Endothelial cell of umbilical vein (primary cell): ENCODE measurements at regions of chr7 and their contacts with region 1.

Region 1: GRCh38 chr7:131107337-131108211 is 220.1 kb upstream of the MKLN1 start:
- DNase-seq: peak; percentile 92
- H3K4me3 ChIP-seq: peak overlapping the region; percentile 61 to 79 (median 63)
- H3K27ac ChIP-seq: peak overlapping the region; percentile 98
- H3K4me1 ChIP-seq: peaks cover 41% of the 10 kb centered on the region
- H3K27me3 ChIP-seq: no peaks in the 10 kb centered on the region
- CTCF ChIP-seq: no peak
- POLR2A ChIP-seq: no peak

Region 2: GRCh38 chr7:130887182-130888016 is 220.2 kb before region 1 on chr7:
- CTCF ChIA-PET with region 1: no interaction called
- POLR2A ChIA-PET with region 1: no interaction called
- dilution Hi-C with region 1: no loop called
- intact Hi-C with region 1: loop called (anchors 5 kb)
- DNase-seq: peak; percentile 89
- H3K4me3 ChIP-seq: no peak overlapping the region
- H3K27ac ChIP-seq: peak overlapping the region; percentile 98
- H3K4me1 ChIP-seq: peaks cover 74% of the 10 kb centered on the region
- H3K27me3 ChIP-seq: no peaks in the 10 kb centered on the region
- CTCF ChIP-seq: no peak
- POLR2A ChIP-seq: peak; percentile 72

Region 3: GRCh38 chr7:131235489-131236317 is 128.1 kb after region 1 on chr7:
- CTCF ChIA-PET with region 1: interaction called, 4 read pairs
- POLR2A ChIA-PET with region 1: interaction called, 3 read pairs
- dilution Hi-C with region 1: no loop called
- intact Hi-C with region 1: loop called (anchors 1 kb)
- DNase-seq: peak; percentile 96
- H3K4me3 ChIP-seq: peak overlapping the region in 1 of 3 experiments; percentile 47
- H3K27ac ChIP-seq: peak overlapping the region; percentile 95
- H3K4me1 ChIP-seq: peaks cover 33% of the 10 kb centered on the region
- H3K27me3 ChIP-seq: no peaks in the 10 kb centered on the region
- CTCF ChIP-seq: no peak
- POLR2A ChIP-seq: no peak

Region 4: GRCh38 chr7:131327626-131328376 is 220.2 kb after region 1 on chr7 and contains the start of gene MKLN1:
- CTCF ChIA-PET with region 1: interaction called, 5 read pairs
- POLR2A ChIA-PET with region 1: interaction called, 4 read pairs
- dilution Hi-C with region 1: no loop called
- intact Hi-C with region 1: loop called (anchors 2 kb)
- DNase-seq: peak; percentile 90
- H3K4me3 ChIP-seq: peak within 1 kb of the TSS; percentile 69 to 99 (median 87)
- H3K27ac ChIP-seq: peak within 1 kb of the TSS; percentile 98
- H3K4me1 ChIP-seq: peaks cover 17% of the 10 kb centered on the region
- H3K27me3 ChIP-seq: no peaks in the 10 kb centered on the region
- CTCF ChIP-seq: no peak
- POLR2A ChIP-seq: peak; percentile 81
- total RNA-seq, gene MKLN1: 31.7 and 32.1 TPM in 2 replicates

Region 5: GRCh38 chr7:131480384-131481315 is 373.1 kb after region 1 on chr7:
- CTCF ChIA-PET with region 1: no interaction called
- POLR2A ChIA-PET with region 1: no interaction called
- dilution Hi-C with region 1: no loop called
- intact Hi-C with region 1: loop called (anchors 1 kb)
- DNase-seq: peak; percentile 85
- H3K4me3 ChIP-seq: peak overlapping the region in 1 of 3 experiments; percentile 31
- H3K27ac ChIP-seq: peak overlapping the region; percentile 76
- H3K4me1 ChIP-seq: peaks cover 29% of the 10 kb centered on the region
- H3K27me3 ChIP-seq: no peaks in the 10 kb centered on the region
- CTCF ChIP-seq: no peak
- POLR2A ChIP-seq: no peak

Region 6: GRCh38 chr7:131625817-131626372 is 518.3 kb after region 1 on chr7:
- CTCF ChIA-PET with region 1: no interaction called
- POLR2A ChIA-PET with region 1: no interaction called
- dilution Hi-C with region 1: no loop called
- intact Hi-C with region 1: loop called (anchors 10 kb)
- DNase-seq: peak; percentile 76
- H3K4me3 ChIP-seq: no peak overlapping the region
- H3K27ac ChIP-seq: peak overlapping the region; percentile 96
- H3K4me1 ChIP-seq: peaks cover 73% of the 10 kb centered on the region
- H3K27me3 ChIP-seq: no peaks in the 10 kb centered on the region
- CTCF ChIP-seq: no peak
- POLR2A ChIP-seq: no peak